ENCODE measurements at regions of chr2 and their contacts with region 1.

Region 1: DNA sequence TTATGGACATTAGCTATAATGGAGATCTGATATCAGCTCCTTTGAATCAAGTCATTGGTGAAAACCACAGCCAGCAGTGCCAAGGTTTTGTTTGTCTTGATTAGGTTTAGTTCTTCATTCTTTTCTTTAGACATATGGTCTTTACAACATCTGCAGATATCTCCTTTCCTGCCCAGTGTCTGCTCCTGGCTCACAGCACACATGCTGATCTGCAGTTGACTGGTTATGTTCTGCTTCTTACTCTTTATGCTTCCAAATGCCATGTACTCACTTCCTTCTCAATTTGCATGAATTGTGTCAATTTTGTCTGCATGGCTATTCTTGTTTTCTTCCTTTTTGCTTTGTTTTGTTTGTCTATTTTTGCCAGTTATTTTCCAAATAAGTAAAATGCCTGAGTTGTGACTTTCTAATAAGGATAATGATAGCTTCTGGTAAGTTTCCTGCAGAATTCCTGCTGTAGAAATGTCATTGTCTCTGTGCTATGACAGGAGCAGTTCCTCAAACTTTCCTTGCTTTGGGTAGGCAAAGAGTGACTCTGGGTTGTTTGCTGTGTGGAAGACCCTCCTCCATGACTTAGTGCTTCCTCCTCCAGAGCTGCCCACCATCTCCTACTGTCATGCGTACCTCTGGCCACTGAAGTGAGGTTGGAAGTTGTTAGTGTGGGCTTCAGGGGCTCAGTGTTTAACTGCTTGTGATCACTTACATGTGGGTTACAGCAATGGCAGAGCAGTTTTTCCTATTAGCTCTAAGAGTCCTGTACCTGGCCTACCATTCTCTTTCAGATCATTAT is 8.2 kb downstream of the ARHGAP25 start:
- DNase-seq: peak in 1 of 2 experiments; percentile 10
- H3K4me3 ChIP-seq: no peak overlapping the region
- H3K27ac ChIP-seq: no peak overlapping the region
- H3K4me1 ChIP-seq: peaks cover 0 to 4% (median 0%) of the 10 kb centered on the region in 4 experiments; a peak in 1 of 7 replicates
- H3K27me3 ChIP-seq: no peaks in the 10 kb centered on the region; a peak in 1 of 7 replicates
- CTCF ChIP-seq: no peak
- EP300 ChIP-seq: no peak
- POLR2A ChIP-seq: no peak
- RAD21 ChIP-seq: no peak

Region 2: DNA sequence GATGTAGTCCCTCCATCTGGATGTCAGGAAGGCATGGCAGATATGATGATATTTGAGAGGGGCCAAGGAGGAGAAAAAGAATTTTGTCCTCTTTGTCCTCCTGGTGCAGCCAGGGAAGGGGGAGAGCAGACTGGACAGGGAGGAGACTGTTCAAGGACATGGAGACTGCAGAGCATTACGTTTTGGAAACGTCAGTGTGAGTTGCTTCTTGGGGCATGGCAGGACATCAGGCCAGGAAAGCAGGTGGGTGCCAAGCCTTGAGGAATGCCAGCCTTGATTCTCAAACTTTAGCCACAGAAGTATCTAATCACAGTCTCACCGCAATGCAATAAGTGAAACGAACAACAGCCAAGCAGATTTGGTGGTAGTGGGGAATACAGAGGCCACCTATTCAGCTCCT is 62.2 kb after region 1 on chr2:
- CTCF ChIA-PET with region 1: no interaction called
- POLR2A ChIA-PET with region 1: no interaction called
- DNase-seq: peak in 1 of 2 experiments; percentile 34
- H3K4me3 ChIP-seq: no peak overlapping the region
- H3K27ac ChIP-seq: no peak overlapping the region
- H3K4me1 ChIP-seq: 0 out of 7 replicates have a peak, but pooled peaks cover 0 to 3% (median 0%) of the 10 kb centered on the region in 4 experiments
- H3K27me3 ChIP-seq: no peaks in the 10 kb centered on the region
- CTCF ChIP-seq: no peak
- EP300 ChIP-seq: no peak
- POLR2A ChIP-seq: no peak
- RAD21 ChIP-seq: no peak

Region 3: GRCh38 chr2:68909793-68910674 is 167.2 kb after region 1 on chr2:
- CTCF ChIA-PET with region 1: interaction called, 10 read pairs
- POLR2A ChIA-PET with region 1: no interaction called
- DNase-seq: peak in 1 of 2 experiments; percentile 80
- H3K4me3 ChIP-seq: no peak overlapping the region
- H3K27ac ChIP-seq: no peak overlapping the region
- H3K4me1 ChIP-seq: peaks cover 0 to 7% (median 4%) of the 10 kb centered on the region in 4 experiments; a peak in 4 of 7 replicates
- H3K27me3 ChIP-seq: no peaks in the 10 kb centered on the region
- CTCF ChIP-seq: peak; percentile 54 to 77 (median 62)
- EP300 ChIP-seq: no peak
- POLR2A ChIP-seq: no peak
- RAD21 ChIP-seq: peak; percentile 77 to 78

Region 4: DNA sequence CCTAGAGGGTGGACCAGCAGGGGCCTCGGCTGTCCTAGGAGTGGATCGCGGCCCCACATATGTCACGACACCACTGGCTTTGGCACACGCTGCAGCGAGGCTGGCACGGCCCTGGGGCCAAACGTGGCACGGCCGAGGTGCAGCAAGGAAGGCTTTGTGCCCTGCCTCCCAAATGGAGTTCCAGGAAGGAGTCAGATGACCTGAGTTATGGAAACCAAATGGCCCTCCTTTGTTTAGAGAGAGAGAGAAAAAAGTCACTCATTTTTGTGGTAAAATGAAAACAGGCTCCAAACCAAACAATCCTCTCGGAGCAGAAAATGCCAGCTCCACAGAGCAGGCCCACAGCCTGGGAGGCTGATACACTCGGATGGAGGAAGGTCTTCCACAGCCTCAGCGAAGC is 375.8 kb after region 1 on chr2:
- CTCF ChIA-PET with region 1: no interaction called
- POLR2A ChIA-PET with region 1: no interaction called
- DNase-seq: no peak
- H3K4me3 ChIP-seq: no peak overlapping the region
- H3K27ac ChIP-seq: no peak overlapping the region
- H3K4me1 ChIP-seq: peaks cover 0 to 10% (median 7%) of the 10 kb centered on the region in 4 experiments; a peak in 5 of 7 replicates
- H3K27me3 ChIP-seq: no peaks in the 10 kb centered on the region; a peak in 1 of 7 replicates
- CTCF ChIP-seq: no peak
- EP300 ChIP-seq: no peak
- POLR2A ChIP-seq: no peak
- RAD21 ChIP-seq: no peak

Measured in H1 (cell line).